Heart left ventricle (tissue), 16 donors: ENCODE measurements at regions of chr12 and their contacts with region 1.

Region 1: GRCh38 chr12:115916910-115917668 is 360.4 kb downstream of the MED13L start:
- DNase-seq: peak; percentile 34 to 76 (median 53)
- ATAC-seq: peak in 3 of 4 donors; percentile 55 to 78 (median 74)
- H3K4me3 ChIP-seq: peak overlapping the region in 2 of 12 donors; percentile 15 to 22
- H3K27ac ChIP-seq: no peak overlapping the region
- H3K4me1 ChIP-seq: peaks cover 0 to 4% (median 0%) of the 10 kb centered on the region in 12 donors
- H3K27me3 ChIP-seq: peaks cover 0 to 57% (median 21%) of the 10 kb centered on the region in 9 donors
- CTCF ChIP-seq: peak; percentile 84 to 98 (median 94)
- POLR2A ChIP-seq: no peak

Region 2: GRCh38 chr12:113980537-113981337 is 1936.4 kb before region 1 on chr12:
- intact Hi-C with region 1: loop called in 2 of 10 experiments (anchors 5 to 10 kb)
- DNase-seq: peak in 1 of 5 donors; percentile 34
- ATAC-seq: peak in 3 of 4 donors; percentile 57 to 73 (median 67)
- H3K4me3 ChIP-seq: no peak overlapping the region
- H3K27ac ChIP-seq: no peak overlapping the region
- H3K4me1 ChIP-seq: no peaks in the 10 kb centered on the region
- H3K27me3 ChIP-seq: peaks cover 0 to 36% (median 10%) of the 10 kb centered on the region in 9 donors
- CTCF ChIP-seq: peak; percentile 77 to 96 (median 88)
- POLR2A ChIP-seq: no peak

Region 3: DNA sequence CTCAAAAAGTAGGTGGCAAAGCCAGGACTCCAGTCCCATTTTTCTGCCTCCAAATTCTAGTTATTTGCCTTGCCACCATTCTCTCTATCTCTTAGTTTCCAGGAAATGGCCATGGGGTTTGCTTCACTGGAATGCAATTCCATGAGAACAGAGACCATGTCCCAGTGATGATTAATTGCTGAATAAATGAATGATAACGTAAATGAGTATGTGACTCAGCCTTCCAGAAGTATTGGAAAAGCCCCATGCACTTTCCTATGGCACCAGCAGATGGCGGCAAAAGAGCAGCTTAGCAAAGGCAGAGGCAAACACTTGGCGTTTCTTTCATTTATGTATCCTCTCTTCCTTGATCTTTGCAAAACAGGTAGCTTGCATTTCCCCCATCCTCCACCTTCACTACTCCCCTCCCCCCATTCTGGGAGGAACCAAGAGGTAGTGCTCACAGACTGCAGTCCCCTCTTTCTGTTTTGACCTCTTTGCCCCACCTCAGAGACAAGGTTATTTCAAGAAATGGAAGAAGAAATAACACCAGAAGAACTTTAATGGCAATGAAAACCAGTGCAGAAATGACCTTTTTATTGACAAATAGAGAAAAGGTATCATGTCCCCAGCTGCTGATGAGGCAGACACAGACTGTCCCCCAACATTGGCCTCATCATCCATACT is 1254.4 kb before region 1 on chr12:
- intact Hi-C with region 1: loop called (anchors 1 to 2 kb)
- DNase-seq: peak in 4 of 5 donors; percentile 55 to 69 (median 64)
- ATAC-seq: peak in 3 of 4 donors; percentile 31 to 63 (median 50)
- H3K4me3 ChIP-seq: no peak overlapping the region
- H3K27ac ChIP-seq: no peak overlapping the region
- H3K4me1 ChIP-seq: peaks cover 0 to 20% (median 4%) of the 10 kb centered on the region in 12 donors
- H3K27me3 ChIP-seq: peaks cover 24 to 70% (median 37%) of the 10 kb centered on the region in 9 donors
- CTCF ChIP-seq: peak; percentile 89 to 96 (median 94)
- POLR2A ChIP-seq: no peak

Region 4: DNA sequence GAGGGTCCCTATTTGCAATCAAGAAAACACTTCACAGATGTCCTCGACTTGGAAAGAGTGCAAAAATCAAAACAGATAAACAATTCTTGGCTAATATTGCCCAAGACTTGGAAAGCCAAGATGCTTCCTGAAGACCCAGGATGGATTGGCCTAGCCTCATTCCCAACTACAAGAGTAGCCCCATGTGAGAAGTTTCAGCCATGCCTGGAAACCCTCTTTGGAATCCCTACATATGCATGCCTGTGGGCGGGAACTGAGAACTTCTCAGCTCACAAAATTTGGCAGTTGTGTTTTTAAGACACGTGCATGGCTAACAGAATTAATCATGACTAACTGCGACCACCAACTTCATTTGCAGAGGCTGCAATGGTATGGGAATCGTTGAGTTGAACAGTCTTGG is 949.9 kb before region 1 on chr12:
- intact Hi-C with region 1: loop called in 1 of 10 experiments (anchors 10 kb)
- DNase-seq: no peak
- ATAC-seq: no peak
- H3K4me3 ChIP-seq: no peak overlapping the region
- H3K27ac ChIP-seq: no peak overlapping the region
- H3K4me1 ChIP-seq: no peaks in the 10 kb centered on the region
- H3K27me3 ChIP-seq: no peaks in the 10 kb centered on the region
- CTCF ChIP-seq: no peak
- POLR2A ChIP-seq: no peak

Region 5: DNA sequence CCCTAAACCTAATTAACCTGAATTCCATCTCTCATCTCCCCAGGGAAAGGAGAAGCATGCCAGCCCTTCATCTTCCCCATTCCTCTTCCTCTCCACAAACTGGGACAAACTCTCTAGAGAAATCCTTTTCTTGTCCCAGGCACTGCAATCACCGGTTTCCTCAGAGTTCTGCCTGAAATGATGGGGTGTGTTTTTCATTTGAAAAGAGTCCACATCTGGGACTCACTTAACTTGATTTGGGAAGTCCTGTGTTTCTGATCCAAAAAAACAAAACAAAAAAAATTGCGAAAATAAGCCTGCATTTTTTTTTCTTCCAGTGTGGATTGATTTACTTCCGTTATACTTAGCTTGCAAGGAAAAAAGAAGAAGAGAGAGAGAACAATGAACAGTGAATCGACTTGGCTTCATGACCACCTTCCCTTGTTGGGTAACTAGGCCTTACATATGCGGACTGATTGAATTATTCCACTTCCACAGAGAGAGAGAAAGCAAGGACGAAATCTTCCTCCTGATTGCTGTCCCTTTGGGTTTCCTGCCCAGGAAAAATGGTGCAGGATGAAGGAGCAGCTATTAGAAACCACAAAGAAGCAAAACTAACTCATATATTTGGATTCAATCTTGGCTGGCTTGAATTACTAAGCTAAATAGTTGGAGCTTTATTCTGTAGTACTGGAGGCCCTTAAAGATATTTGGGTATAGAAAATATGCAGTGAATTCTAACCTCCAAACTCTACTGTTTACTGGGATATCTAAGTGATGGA is 726.9 kb before region 1 on chr12:
- intact Hi-C with region 1: no loop called
- DNase-seq: no peak
- ATAC-seq: no peak
- H3K4me3 ChIP-seq: no peak overlapping the region
- H3K27ac ChIP-seq: no peak overlapping the region
- H3K4me1 ChIP-seq: peaks cover 0 to 4% (median 0%) of the 10 kb centered on the region in 12 donors
- H3K27me3 ChIP-seq: no peaks in the 10 kb centered on the region
- CTCF ChIP-seq: no peak
- POLR2A ChIP-seq: no peak

Region 6: GRCh38 chr12:115521771-115522409 is 395.2 kb before region 1 on chr12:
- intact Hi-C with region 1: no loop called
- DNase-seq: no peak
- ATAC-seq: no peak
- H3K4me3 ChIP-seq: no peak overlapping the region
- H3K27ac ChIP-seq: no peak overlapping the region
- H3K4me1 ChIP-seq: peaks cover 0 to 3% (median 0%) of the 10 kb centered on the region in 12 donors
- H3K27me3 ChIP-seq: no peaks in the 10 kb centered on the region
- CTCF ChIP-seq: no peak
- POLR2A ChIP-seq: no peak

Region 7: GRCh38 chr12:115640929-115641328 is 276.2 kb before region 1 on chr12:
- intact Hi-C with region 1: loop called in 1 of 10 experiments (anchors 5 kb)
- DNase-seq: no peak
- ATAC-seq: no peak
- H3K4me3 ChIP-seq: no peak overlapping the region
- H3K27ac ChIP-seq: no peak overlapping the region
- H3K4me1 ChIP-seq: peaks cover 0 to 8% (median 0%) of the 10 kb centered on the region in 12 donors
- H3K27me3 ChIP-seq: peaks cover 0 to 8% (median 0%) of the 10 kb centered on the region in 9 donors
- CTCF ChIP-seq: no peak
- POLR2A ChIP-seq: no peak

Region 8: GRCh38 chr12:115763376-115763775 is 153.7 kb before region 1 on chr12:
- intact Hi-C with region 1: loop called in 5 of 10 experiments (anchors 5 to 10 kb)
- DNase-seq: no peak
- ATAC-seq: no peak
- H3K4me3 ChIP-seq: no peak overlapping the region
- H3K27ac ChIP-seq: no peak overlapping the region
- H3K4me1 ChIP-seq: no peaks in the 10 kb centered on the region
- H3K27me3 ChIP-seq: peaks cover 0 to 18% (median 2%) of the 10 kb centered on the region in 9 donors
- CTCF ChIP-seq: no peak
- POLR2A ChIP-seq: no peak